ENCODE measurements at regions of chr15 and their contacts with region 1.

Region 1: DNA sequence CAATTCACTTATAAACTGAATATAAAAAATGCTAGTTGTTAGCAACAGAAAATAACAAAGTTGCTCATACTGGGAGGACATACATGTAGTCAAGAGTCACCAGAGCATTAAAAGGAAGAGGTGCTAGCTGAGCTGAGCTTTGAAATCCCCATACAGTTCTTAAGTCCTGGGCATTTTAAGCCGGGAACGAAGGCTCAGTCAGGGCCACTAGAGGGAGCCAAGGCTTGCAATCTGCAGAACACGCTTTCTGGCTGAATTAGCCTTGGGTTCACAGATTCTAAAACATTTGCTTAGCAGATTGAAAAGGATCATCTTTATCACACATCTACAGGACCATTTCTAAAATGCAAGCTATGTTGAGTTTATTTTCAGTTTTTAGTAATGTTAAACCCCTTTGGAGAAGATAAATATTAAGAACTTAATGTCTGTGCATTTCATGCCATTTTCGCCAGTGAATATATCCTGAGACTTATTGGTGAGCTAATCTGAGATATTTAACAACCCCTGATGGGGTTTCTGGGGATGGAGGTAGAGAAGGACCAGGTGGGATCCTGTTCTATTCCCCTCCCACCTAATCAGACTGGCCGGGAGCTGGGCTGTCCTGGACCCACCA is 26.3 kb upstream of the MNS1 start:
- DNase-seq: peak; percentile 54
- ATAC-seq: peak; percentile 92
- H3K4me3 ChIP-seq: no peak overlapping the region
- H3K27ac ChIP-seq: no peak overlapping the region
- H3K4me1 ChIP-seq: 0 out of 2 replicates have a peak, but pooled peaks cover 6% of the 10 kb centered on the region
- H3K27me3 ChIP-seq: no peaks in the 10 kb centered on the region
- CTCF ChIP-seq: peak; percentile 82
- EP300 ChIP-seq: no peak
- POLR2A ChIP-seq: no peak
- RAD21 ChIP-seq: no peak; the same call in 1 of the 2 replicates

Region 2: DNA sequence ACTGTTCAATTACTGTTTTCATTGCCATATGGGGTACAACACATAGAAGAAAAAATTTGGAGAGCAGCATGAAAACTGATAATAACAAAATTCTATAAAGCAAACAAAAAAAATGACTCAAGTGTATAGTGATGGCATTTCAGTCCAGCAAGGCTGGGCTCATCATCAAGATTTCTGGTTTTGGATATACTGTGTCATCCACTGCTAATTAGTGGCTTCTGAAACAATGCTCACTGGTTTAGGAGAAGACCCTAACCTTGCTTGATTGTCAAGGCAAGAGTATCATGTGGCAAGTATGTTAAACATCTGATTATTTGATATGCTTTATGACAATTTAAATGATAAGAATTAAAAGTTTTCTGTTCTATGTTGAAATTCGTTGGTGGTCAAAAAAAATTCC is 344.5 kb before region 1 on chr15:
- CTCF ChIA-PET with region 1: no interaction called
- POLR2A ChIA-PET with region 1: no interaction called
- in situ Hi-C with region 1: no loop called
- intact Hi-C with region 1: no loop called
- DNase-seq: no peak
- ATAC-seq: no peak
- H3K4me3 ChIP-seq: no peak overlapping the region
- H3K27ac ChIP-seq: no peak overlapping the region
- H3K4me1 ChIP-seq: no peaks in the 10 kb centered on the region
- H3K27me3 ChIP-seq: no peaks in the 10 kb centered on the region
- CTCF ChIP-seq: no peak
- EP300 ChIP-seq: no peak
- POLR2A ChIP-seq: no peak
- RAD21 ChIP-seq: no peak

Region 3: DNA sequence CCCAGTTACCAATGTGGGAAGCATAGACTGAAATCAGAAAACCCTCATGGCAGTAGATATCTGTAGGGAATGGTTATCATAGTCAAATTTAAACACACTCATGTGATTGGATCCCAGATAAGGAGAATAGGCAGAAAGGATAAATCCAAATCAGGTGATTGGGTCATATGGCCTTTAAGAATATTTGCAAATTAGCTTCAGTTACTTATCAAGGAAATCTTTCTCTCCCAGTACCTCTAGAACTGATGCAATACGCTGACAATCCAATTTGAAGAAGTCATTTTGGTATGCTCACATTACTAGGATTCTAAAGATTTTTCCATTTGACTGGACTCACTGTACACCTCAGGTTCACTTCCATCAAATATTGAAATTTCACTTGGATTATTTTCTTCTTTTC is 61.5 kb after region 1 on chr15:
- CTCF ChIA-PET with region 1: no interaction called
- POLR2A ChIA-PET with region 1: no interaction called
- in situ Hi-C with region 1: no loop called
- intact Hi-C with region 1: no loop called
- DNase-seq: no peak
- ATAC-seq: no peak
- H3K4me3 ChIP-seq: no peak overlapping the region
- H3K27ac ChIP-seq: no peak overlapping the region
- H3K4me1 ChIP-seq: no peaks in the 10 kb centered on the region
- H3K27me3 ChIP-seq: no peaks in the 10 kb centered on the region
- CTCF ChIP-seq: no peak
- EP300 ChIP-seq: no peak
- POLR2A ChIP-seq: no peak
- RAD21 ChIP-seq: no peak

Region 4: GRCh38 chr15:56732921-56733797 is 241.9 kb after region 1 on chr15 and contains the start of gene ZNF280D:
- CTCF ChIA-PET with region 1: no interaction called
- POLR2A ChIA-PET with region 1: no interaction called
- in situ Hi-C with region 1: no loop called
- intact Hi-C with region 1: loop called (anchors 10 kb)
- DNase-seq: peak; percentile 57
- ATAC-seq: peak; percentile 94
- H3K4me3 ChIP-seq: peak within 1 kb of the TSS; percentile 65 to 84 (median 78)
- H3K27ac ChIP-seq: peak within 1 kb of the TSS; percentile 88
- H3K4me1 ChIP-seq: peaks cover 58% of the 10 kb centered on the region
- H3K27me3 ChIP-seq: no peaks in the 10 kb centered on the region; a peak in 1 of 5 replicates
- CTCF ChIP-seq: no peak
- EP300 ChIP-seq: no peak
- POLR2A ChIP-seq: peak; percentile 20 to 61; a peak in 3 of 4 replicates
- RAD21 ChIP-seq: peak; percentile 22; the same call in 1 of the 2 replicates
- total RNA-seq, gene ZNF280D: 11.9 and 13.1 TPM in 2 replicates

Region 5: GRCh38 chr15:56869573-56869972 is 378.4 kb after region 1 on chr15:
- CTCF ChIA-PET with region 1: no interaction called
- POLR2A ChIA-PET with region 1: no interaction called
- in situ Hi-C with region 1: loop called (anchors 10 kb)
- intact Hi-C with region 1: loop called (anchors 5 kb)
- DNase-seq: no peak
- ATAC-seq: no peak
- H3K4me3 ChIP-seq: no peak overlapping the region
- H3K27ac ChIP-seq: no peak overlapping the region
- H3K4me1 ChIP-seq: no peaks in the 10 kb centered on the region; the same call in 1 of the 2 replicates
- H3K27me3 ChIP-seq: no peaks in the 10 kb centered on the region
- CTCF ChIP-seq: peak; percentile 59
- EP300 ChIP-seq: no peak
- POLR2A ChIP-seq: no peak
- RAD21 ChIP-seq: 0 out of 2 replicates have a peak, but pooled peaks have one; percentile 19

Region 6: DNA sequence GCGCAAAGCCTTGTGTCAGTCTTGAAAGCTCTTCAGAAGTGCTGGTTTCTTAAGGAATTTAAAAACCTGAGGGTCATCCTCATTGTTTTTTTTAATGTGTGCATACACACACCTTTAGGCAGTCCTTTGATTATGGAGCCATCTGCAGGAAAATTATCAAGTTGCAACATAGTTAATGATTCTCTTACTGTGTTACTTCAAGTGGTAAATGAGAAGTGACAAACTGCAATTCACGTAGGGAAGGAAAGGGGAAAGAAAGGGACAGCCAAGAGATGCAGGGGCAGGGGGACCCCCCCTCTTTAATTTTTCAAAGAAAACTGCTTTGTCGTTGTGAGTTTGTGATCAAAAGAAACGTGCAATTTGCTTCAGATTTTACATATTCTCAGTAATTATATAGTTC is 722.6 kb after region 1 on chr15:
- CTCF ChIA-PET with region 1: no interaction called
- POLR2A ChIA-PET with region 1: no interaction called
- in situ Hi-C with region 1: no loop called
- intact Hi-C with region 1: loop called (anchors 10 kb)
- DNase-seq: peak; percentile 41
- ATAC-seq: peak; percentile 67
- H3K4me3 ChIP-seq: no peak overlapping the region
- H3K27ac ChIP-seq: no peak overlapping the region
- H3K4me1 ChIP-seq: peaks cover 12% of the 10 kb centered on the region
- H3K27me3 ChIP-seq: no peaks in the 10 kb centered on the region
- CTCF ChIP-seq: peak; percentile 67
- EP300 ChIP-seq: no peak
- POLR2A ChIP-seq: no peak
- RAD21 ChIP-seq: no peak; the same call in 1 of the 2 replicates

Region 7: DNA sequence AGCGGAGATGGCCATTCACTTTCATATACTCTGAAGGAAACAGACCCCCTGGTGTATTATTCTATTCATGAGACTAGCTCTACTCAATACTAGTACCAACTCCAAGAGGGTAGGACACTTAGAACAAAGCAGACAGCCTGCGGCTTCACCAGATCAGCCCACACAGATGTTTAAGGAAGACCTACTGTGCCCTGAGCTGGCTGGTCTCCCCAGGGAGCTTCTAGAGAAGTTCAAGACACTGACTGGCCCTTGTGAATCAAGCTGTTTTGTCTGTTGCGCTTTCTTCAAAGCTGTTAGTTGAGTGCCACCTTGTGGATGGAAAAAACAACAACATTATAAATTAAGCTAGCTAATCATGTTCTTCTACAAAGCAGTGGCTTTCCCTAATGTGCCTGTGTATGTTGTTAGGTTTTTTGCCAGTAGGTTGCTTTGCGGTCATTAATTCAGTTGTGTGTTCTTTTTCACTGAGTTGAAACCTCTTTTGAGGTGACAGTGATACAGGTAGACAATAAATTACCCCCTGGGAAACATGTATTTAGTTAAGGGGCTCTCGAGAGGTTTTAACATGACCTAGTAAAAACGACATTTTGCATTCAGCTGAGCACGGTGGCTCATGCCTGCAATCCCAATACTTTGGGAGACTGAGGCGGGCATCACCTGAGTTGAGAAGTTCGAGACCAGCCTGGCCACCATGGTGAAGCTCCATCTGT is 1036.3 kb after region 1 on chr15:
- CTCF ChIA-PET with region 1: no interaction called
- POLR2A ChIA-PET with region 1: no interaction called
- in situ Hi-C with region 1: loop called (anchors 25 kb)
- intact Hi-C with region 1: no loop called
- DNase-seq: peak; percentile 76
- ATAC-seq: peak; percentile 58
- H3K4me3 ChIP-seq: no peak overlapping the region
- H3K27ac ChIP-seq: no peak overlapping the region
- H3K4me1 ChIP-seq: no peaks in the 10 kb centered on the region
- H3K27me3 ChIP-seq: no peaks in the 10 kb centered on the region
- CTCF ChIP-seq: peak; percentile 83
- EP300 ChIP-seq: no peak
- POLR2A ChIP-seq: no peak
- RAD21 ChIP-seq: peak; percentile 81

Measured in HepG2 (cell line).